Activated CD4-positive, alpha-beta T cell treated with anti-CD3 and anti-CD28 coated beads, Interleukin-2, amount 10 ng/mL, durations not matched to agents 7 days and 5 days (primary cell): ENCODE measurements at regions of chr14 and their contacts with region 1.

Region 1: GRCh38 chr14:70121521-70121920 is 67.2 kb downstream of the SLC8A3 start:
- DNase-seq: no peak
- H3K4me3 Mint-ChIP-seq: no peak overlapping the region
- H3K27ac Mint-ChIP-seq: no peak overlapping the region
- H3K4me1 Mint-ChIP-seq: no peaks in the 10 kb centered on the region
- H3K27me3 Mint-ChIP-seq: peaks cover 5% of the 10 kb centered on the region

Region 2: GRCh38 chr14:70133461-70133860 is 11.9 kb after region 1 on chr14:
- CTCF ChIA-PET with region 1: no interaction called
- POLR2A ChIA-PET with region 1: no interaction called
- DNase-seq: no peak
- H3K4me3 Mint-ChIP-seq: no peak overlapping the region
- H3K27ac Mint-ChIP-seq: no peak overlapping the region
- H3K4me1 Mint-ChIP-seq: no peaks in the 10 kb centered on the region
- H3K27me3 Mint-ChIP-seq: peaks cover 19% of the 10 kb centered on the region

Region 3: DNA sequence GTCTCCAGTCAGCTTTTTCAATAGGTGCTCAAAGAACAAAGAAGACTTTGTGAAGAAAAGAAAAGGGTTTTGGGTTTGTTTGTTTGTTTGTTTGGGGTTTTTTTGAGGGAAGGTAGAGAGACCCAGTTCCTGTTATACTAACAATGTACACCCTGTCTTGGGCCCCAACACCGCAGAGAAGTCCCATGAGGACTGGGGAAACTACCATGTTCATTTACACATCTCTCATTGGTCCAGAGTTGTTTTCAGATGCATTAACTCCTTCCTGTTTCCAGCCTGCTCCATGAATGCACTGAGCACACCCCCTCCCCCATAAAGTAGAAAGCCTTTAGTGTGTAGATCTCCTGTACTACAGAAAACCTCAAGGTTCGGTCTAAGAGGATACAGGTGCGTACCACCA is 118.3 kb after region 1 on chr14:
- CTCF ChIA-PET with region 1: no interaction called
- POLR2A ChIA-PET with region 1: interaction called, 11 read pairs
- DNase-seq: no peak
- H3K4me3 Mint-ChIP-seq: no peak overlapping the region
- H3K27ac Mint-ChIP-seq: no peak overlapping the region
- H3K4me1 Mint-ChIP-seq: no peaks in the 10 kb centered on the region
- H3K27me3 Mint-ChIP-seq: peaks cover 31% of the 10 kb centered on the region